ENCODE measurements at regions of chr9 and their contacts with region 1.

Region 1: DNA sequence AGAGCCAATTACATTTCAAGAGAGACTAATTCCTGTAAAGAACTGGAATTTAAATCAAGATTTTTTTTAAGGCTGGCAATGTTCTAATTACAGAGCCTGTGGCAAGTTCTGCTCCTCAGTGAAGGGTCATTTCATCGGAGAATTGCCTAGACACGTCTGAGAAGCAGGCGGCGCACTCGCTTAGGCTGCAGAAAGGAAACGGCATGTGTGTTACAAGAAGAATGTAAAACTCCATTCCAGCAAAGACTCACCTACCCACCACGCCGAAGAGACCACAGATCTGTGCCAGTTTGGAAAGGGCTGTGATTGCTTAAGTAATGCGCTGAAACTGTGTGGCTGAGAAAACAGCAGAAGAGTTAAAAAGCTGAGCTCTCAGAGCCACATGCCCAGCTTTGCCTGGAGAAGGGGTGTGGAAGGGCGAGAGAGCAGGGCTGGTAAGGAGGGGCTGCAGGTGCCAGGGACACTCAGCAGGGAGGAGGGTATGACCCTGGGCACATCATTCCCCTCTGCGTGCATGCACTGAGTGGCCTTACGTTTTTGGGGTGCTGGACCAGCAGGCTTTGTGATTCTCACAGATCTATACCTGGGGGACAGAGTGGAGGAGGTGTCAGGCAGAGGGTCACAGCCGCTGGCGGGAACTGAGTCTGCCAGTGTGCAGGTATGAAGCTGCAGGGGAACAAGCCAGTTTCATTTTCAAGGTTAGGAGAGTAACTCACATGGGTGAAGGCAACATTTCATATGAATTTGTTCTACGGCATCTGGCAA is 17.8 kb upstream of the SLC25A51 start:
- DNase-seq: no peak
- ATAC-seq: peak; percentile 15

Region 2: DNA sequence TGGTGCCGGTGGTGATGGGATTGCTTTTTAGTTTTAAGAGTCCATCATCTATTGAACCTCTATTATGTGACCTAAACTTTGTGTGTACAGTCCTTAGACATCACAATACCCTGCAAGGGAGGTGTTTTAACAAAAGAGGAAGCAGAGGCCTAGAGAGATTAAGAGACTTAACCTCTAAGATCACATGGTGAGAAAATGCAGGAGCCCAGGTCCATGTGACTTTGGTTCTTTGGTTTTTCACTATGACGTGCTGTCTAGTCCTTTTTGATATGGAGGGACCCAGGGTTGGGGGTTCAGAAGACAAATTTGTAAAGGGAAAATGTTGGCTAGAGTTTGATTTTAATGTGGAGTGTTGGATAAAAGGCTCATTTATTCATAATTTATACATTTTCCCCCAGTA is 202.2 kb before region 1 on chr9:
- intact Hi-C with region 1: no loop called
- DNase-seq: no peak
- ATAC-seq: no peak

Region 3: DNA sequence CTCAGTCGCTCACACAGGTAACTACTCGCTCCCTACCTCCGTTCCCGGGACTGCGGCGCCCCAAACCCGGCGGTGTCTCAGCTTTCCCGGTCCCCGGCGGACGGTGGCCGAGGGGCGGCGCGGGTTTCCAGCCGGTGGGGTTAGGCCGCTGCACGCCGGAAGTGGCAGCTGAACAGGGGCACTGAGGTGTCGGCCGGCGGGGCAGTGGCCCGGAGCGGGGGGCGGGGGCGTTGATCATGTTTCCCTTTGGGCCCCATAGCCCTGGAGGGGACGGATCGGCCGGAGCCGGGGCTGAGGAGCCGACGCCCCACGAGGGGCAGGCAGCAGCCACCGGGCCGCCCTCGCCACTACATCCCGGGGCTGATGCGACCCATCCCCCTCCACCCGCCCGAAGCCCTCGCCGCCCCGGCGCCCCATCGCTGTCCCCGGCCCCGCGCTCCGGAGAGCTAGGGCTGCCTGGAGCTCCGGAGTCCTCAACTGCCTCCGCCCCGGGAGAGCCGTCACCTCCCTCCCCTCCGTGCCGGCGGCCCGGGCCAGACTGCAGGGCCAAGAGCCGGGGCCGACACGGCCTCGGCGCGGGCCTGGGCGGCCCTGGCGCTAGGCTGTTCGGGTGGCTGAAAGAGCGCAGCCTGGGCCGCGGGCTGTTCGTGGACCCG is 121.0 kb before region 1 on chr9 and contains the start of gene DCAF10:
- intact Hi-C with region 1: no loop called
- DNase-seq: peak; percentile 94
- ATAC-seq: peak; percentile 97
- total RNA-seq, gene DCAF10: 22.3 TPM

Region 4: GRCh38 chr9:37938121-37938891 is 16.6 kb after region 1 on chr9:
- intact Hi-C with region 1: loop called (anchors 1 kb)
- DNase-seq: peak; percentile 60
- ATAC-seq: peak; percentile 47

Region 5: DNA sequence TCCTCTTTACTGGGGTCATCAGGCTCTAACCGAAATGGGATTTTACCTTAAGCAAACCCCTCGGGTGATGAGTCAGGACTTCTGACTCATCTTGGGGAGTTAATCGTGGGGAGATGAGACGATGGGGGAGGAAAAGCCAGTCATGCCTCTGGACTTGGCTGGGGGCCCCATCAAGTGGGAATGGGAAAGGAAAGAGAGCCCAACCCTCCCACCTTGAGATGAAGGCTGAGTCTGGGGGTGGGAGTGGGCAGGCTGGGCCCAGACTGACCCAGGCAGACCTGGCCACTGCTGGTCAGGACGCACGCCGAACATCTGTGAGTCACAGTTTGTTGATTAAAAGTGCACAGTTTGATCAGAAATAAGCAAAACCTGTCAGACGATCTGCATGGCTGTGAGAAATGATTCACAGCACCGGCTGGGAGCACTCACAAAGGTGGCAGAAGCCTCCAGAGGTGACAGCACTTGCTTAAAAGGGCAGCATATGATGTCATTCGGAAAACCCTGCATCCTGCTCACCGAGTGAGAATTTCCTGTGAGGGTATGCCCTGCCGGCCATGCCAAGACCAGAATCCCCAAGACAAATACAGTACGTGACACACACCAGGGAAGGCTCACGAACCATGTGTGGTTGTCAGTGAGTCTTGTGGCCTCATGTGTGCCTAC is 32.2 kb after region 1 on chr9:
- intact Hi-C with region 1: no loop called
- DNase-seq: no peak
- ATAC-seq: no peak

Measured in Right ventricle myocardium inferior (tissue), 1 donor.